CD14-positive monocyte (primary cell): ENCODE measurements at regions of chr7 and their contacts with region 1.

Region 1: GRCh38 chr7:909358-910329 is 33.3 kb downstream of the GET4 start:
- DNase-seq: peak; percentile 97 to 99 (median 98)
- H3K4me3 ChIP-seq: peak overlapping the region; percentile 38 to 78 (median 54)
- H3K4me3 Mint-ChIP-seq: peak overlapping the region; percentile 72 to 78
- H3K27ac ChIP-seq: peak overlapping the region; percentile 84 to 99
- H3K27ac Mint-ChIP-seq: peak overlapping the region; percentile 92 to 97 (median 96)
- H3K4me1 ChIP-seq: peaks cover 74 to 79% of the 10 kb centered on the region in 2 donors
- H3K4me1 Mint-ChIP-seq: peaks cover 50% of the 10 kb centered on the region
- H3K27me3 ChIP-seq: no peaks in the 10 kb centered on the region
- H3K27me3 Mint-ChIP-seq: no peaks in the 10 kb centered on the region
- CTCF ChIP-seq: peak; percentile 42

Region 2: GRCh38 chr7:923108-924041 is 13.7 kb after region 1 on chr7:
- intact Hi-C with region 1: loop called (anchors 1 to 2 kb)
- DNase-seq: peak; percentile 95 to 97 (median 96)
- H3K4me3 ChIP-seq: peak overlapping the region; percentile 12 to 65 (median 40)
- H3K4me3 Mint-ChIP-seq: peak overlapping the region; percentile 66 to 80
- H3K27ac ChIP-seq: peak overlapping the region; percentile 98 to 100
- H3K27ac Mint-ChIP-seq: peak overlapping the region; percentile 93 to 98 (median 95)
- H3K4me1 ChIP-seq: peaks cover 73 to 89% of the 10 kb centered on the region in 2 donors
- H3K4me1 Mint-ChIP-seq: peaks cover 62% of the 10 kb centered on the region
- H3K27me3 ChIP-seq: no peaks in the 10 kb centered on the region
- H3K27me3 Mint-ChIP-seq: peaks cover 0 to 2% (median 0%) of the 10 kb centered on the region in 3 donors
- CTCF ChIP-seq: no peak

Region 3: DNA sequence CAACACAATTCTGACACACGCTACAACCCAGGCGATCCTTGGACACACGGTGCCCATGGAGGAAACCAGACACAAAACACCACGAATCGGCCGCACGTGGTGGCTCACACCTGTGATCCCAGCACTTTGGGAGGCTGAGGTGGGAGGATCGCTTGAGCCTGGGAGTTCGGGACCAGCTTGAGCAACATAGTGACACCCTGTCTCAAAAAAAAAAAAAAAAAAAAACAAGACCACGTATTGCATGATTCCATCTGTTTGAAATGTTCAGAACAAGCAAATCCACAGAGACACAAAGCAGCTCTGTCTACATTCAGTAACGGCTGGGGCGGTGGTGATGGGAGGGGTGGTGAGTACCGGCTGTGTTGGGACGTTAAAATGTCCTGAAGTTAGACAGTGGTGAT is 19.7 kb after region 1 on chr7:
- intact Hi-C with region 1: loop called in 1 of 2 experiments (anchors 2 kb)
- DNase-seq: no peak
- H3K4me3 ChIP-seq: no peak overlapping the region
- H3K4me3 Mint-ChIP-seq: peak overlapping the region; percentile 70 to 81
- H3K27ac ChIP-seq: peak overlapping the region; percentile 96 to 98
- H3K27ac Mint-ChIP-seq: peak overlapping the region; percentile 98 to 100 (median 99)
- H3K4me1 ChIP-seq: peaks cover 87 to 90% of the 10 kb centered on the region in 2 donors
- H3K4me1 Mint-ChIP-seq: peaks cover 76% of the 10 kb centered on the region
- H3K27me3 ChIP-seq: no peaks in the 10 kb centered on the region
- H3K27me3 Mint-ChIP-seq: peaks cover 0 to 6% (median 3%) of the 10 kb centered on the region in 3 donors
- CTCF ChIP-seq: no peak